ENCODE measurements at regions of chr2 and their contacts with region 1.

Region 1: GRCh38 chr2:136135921-136136906 is 18.3 kb upstream of the CXCR4 start:
- DNase-seq: peak; percentile 82
- ATAC-seq: peak; percentile 64
- H3K4me3 Mint-ChIP-seq: peak overlapping the region; percentile 30
- H3K27ac Mint-ChIP-seq: peak overlapping the region; percentile 78
- H3K4me1 Mint-ChIP-seq: peaks cover 93% of the 10 kb centered on the region
- H3K27me3 Mint-ChIP-seq: peaks cover 11% of the 10 kb centered on the region
- CTCF ChIP-seq: no peak

Region 2: GRCh38 chr2:135985018-135985825 is 151.0 kb before region 1 on chr2 and contains the start of gene DARS1:
- CTCF ChIA-PET with region 1: no interaction called
- POLR2A ChIA-PET with region 1: interaction called, 7 read pairs
- intact Hi-C with region 1: loop called (anchors 5 kb)
- DNase-seq: peak; percentile 93
- ATAC-seq: peak; percentile 85
- H3K4me3 Mint-ChIP-seq: peak within 1 kb of the TSS; percentile 90
- H3K27ac Mint-ChIP-seq: peak within 1 kb of the TSS; percentile 97
- H3K4me1 Mint-ChIP-seq: peaks cover 45% of the 10 kb centered on the region
- H3K27me3 Mint-ChIP-seq: no peaks in the 10 kb centered on the region
- CTCF ChIP-seq: no peak
- total RNA-seq, gene DARS1: 210 to 211 TPM

Region 3: DNA sequence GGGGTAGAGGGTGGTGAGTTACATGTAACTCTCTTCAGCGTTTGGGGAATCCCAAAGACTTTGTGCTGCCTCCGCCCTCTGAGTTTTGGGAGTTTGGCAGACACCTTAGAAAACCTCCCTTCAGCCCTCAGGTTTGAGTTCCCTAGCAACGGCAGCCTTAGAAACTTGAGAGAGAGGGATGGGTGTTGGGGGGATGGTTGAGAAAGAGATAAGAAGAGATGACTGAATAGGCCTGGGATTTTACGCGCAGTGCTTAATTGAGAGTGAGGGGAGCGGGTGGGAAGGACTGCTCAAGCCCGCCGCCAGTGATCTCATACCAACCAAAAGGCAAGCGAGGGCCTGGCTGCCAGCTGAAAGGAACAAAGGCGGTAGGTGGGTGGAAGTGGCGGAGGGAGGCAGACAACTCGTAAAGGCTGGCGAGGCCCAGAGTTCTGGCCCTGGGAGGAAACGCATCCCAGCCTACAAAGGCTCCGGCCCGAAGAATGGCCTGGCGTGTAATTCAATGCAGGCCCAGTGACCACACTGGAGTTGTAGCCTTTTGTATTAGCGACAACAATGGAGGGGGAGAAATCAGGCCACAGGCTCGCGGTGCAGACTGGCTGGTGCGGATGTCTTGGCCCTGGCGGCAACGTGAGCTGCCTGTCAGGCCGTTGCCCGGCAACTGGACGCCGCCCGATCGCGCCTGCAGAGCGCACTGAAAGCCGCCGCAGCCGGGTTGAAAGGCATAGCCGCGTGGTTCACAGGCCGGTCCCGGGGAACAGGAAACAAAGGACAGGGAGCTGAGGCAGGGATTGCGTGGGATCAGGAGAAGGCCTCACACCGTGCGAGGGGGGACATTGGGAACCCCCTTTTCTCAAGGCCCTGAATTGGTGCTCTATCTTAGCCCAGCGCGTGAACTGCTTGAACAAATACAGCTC is 110.9 kb before region 1 on chr2:
- CTCF ChIA-PET with region 1: no interaction called
- POLR2A ChIA-PET with region 1: no interaction called
- intact Hi-C with region 1: no loop called
- DNase-seq: peak; percentile 60
- ATAC-seq: peak; percentile 89
- H3K4me3 Mint-ChIP-seq: peak overlapping the region; percentile 13
- H3K27ac Mint-ChIP-seq: no peak overlapping the region
- H3K4me1 Mint-ChIP-seq: peaks cover 10% of the 10 kb centered on the region
- H3K27me3 Mint-ChIP-seq: no peaks in the 10 kb centered on the region
- CTCF ChIP-seq: no peak

Region 4: GRCh38 chr2:136117909-136118818 is 18.1 kb before region 1 on chr2 and contains the start of gene CXCR4:
- CTCF ChIA-PET with region 1: interaction called, 14 read pairs
- POLR2A ChIA-PET with region 1: interaction called, 28 read pairs
- intact Hi-C with region 1: no loop called
- DNase-seq: peak; percentile 87
- ATAC-seq: peak; percentile 40
- H3K4me3 Mint-ChIP-seq: peak within 1 kb of the TSS; percentile 96
- H3K27ac Mint-ChIP-seq: peak within 1 kb of the TSS; percentile 95
- H3K4me1 Mint-ChIP-seq: peaks cover 56% of the 10 kb centered on the region
- H3K27me3 Mint-ChIP-seq: no peaks in the 10 kb centered on the region
- CTCF ChIP-seq: no peak
- total RNA-seq, gene CXCR4: 97.0 to 103 TPM

Region 5: DNA sequence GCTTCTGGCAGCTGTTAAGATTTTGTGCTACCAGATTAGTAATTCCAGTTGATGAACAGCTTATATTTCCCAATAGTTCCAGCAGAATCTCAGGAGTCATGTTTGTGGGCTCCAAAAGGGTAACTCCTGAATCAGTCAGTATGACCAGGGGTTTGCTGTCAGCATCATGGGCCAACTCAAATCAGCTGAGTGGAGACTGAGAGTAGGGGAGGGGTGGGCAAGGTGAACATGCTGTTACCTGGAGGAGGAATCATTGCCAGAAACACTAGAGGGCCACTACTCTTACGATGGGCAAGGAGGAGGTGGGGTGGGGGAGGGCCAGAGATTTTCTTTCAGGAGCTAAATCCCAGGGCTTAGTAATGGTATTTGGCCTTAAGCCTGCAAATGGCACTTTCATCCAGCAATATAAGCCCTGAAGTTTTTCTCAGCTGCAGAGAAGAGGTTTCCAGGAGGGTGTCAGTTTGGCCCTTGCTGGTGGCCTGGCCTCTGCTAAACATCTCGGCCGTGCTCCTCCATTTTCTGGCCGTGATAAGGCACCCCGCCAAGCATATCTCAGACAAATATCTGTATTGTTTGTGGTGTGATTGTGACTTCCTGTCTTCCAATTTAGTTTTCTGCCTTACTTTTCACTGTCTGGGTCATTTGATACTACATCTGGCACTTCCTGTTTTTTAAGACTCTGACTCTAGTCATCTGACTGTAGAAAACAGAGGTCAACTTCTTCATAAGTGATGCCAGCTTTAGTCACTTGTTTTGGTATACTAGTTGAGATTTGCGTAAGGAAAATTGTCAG is 102.3 kb after region 1 on chr2:
- CTCF ChIA-PET with region 1: interaction called, 5 read pairs
- POLR2A ChIA-PET with region 1: interaction called, 9 read pairs
- intact Hi-C with region 1: loop called (anchors 1 kb)
- DNase-seq: peak; percentile 48
- ATAC-seq: peak; percentile 77
- H3K4me3 Mint-ChIP-seq: peak overlapping the region; percentile 4
- H3K27ac Mint-ChIP-seq: peak overlapping the region; percentile 88
- H3K4me1 Mint-ChIP-seq: peaks cover 54% of the 10 kb centered on the region
- H3K27me3 Mint-ChIP-seq: no peaks in the 10 kb centered on the region
- CTCF ChIP-seq: no peak

Region 6: GRCh38 chr2:136334967-136335366 is 198.8 kb after region 1 on chr2:
- CTCF ChIA-PET with region 1: no interaction called
- POLR2A ChIA-PET with region 1: no interaction called
- intact Hi-C with region 1: no loop called
- DNase-seq: no peak
- ATAC-seq: no peak
- H3K4me3 Mint-ChIP-seq: no peak overlapping the region
- H3K27ac Mint-ChIP-seq: no peak overlapping the region
- H3K4me1 Mint-ChIP-seq: peaks cover 2% of the 10 kb centered on the region
- H3K27me3 Mint-ChIP-seq: no peaks in the 10 kb centered on the region
- CTCF ChIP-seq: no peak

Region 7: GRCh38 chr2:136362676-136363390 is 226.6 kb after region 1 on chr2:
- CTCF ChIA-PET with region 1: interaction called, 3 read pairs
- POLR2A ChIA-PET with region 1: interaction called, 5 read pairs
- intact Hi-C with region 1: loop called (anchors 2 kb)
- DNase-seq: peak; percentile 70
- ATAC-seq: peak; percentile 79
- H3K4me3 Mint-ChIP-seq: no peak overlapping the region
- H3K27ac Mint-ChIP-seq: peak overlapping the region; percentile 2
- H3K4me1 Mint-ChIP-seq: peaks cover 51% of the 10 kb centered on the region
- H3K27me3 Mint-ChIP-seq: peaks cover 6% of the 10 kb centered on the region
- CTCF ChIP-seq: no peak

Region 8: GRCh38 chr2:136384531-136385303 is 248.5 kb after region 1 on chr2:
- CTCF ChIA-PET with region 1: interaction called, 11 read pairs
- POLR2A ChIA-PET with region 1: interaction called, 9 read pairs
- intact Hi-C with region 1: loop called (anchors 2 kb)
- DNase-seq: peak; percentile 61
- ATAC-seq: peak; percentile 50
- H3K4me3 Mint-ChIP-seq: no peak overlapping the region
- H3K27ac Mint-ChIP-seq: peak overlapping the region; percentile 35
- H3K4me1 Mint-ChIP-seq: peaks cover 43% of the 10 kb centered on the region
- H3K27me3 Mint-ChIP-seq: no peaks in the 10 kb centered on the region
- CTCF ChIP-seq: peak; percentile 89

Measured in activated CD8-positive, alpha-beta T cell treated with anti-CD3 and anti-CD28 coated beads for 36 hours (primary cell).